ENCODE measurements at regions of chr1 and their contacts with region 1.

Region 1: DNA sequence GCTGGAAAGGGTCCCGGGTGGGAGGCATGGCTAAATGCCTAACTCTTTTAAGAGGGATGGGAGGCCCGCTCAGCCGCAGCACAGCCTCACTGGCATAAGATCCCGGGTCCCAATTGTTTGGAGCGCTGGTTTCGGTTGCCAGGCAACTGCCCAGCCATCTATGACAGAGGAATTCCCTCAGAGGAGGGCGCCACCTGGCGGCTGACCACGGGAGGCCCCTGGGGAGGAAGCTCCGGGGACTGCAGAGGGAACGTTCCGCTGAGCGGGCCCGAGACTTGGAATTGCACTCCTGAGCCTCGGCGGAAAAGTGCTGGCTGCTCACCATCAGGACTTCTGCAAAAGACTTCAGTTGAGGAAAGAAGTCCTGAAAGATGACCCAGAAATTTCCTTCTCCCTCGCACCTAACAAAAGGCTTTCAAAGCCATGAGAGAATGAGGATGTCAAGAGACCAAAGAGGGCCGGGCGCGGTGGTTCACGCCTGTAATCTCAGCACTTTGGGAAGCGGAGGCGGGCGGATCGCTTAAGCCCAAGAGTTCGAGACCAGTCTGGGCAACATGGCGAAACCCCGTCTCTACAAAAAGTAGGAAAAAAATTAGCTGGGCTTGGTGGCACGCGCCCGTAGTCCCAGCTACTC is 1.1 kb upstream of the ELAPOR1 start:
- DNase-seq: peak; percentile 81 to 88
- H3K4me3 ChIP-seq: no peak overlapping the region
- H3K4me3 Mint-ChIP-seq: peak overlapping the region; percentile 39
- H3K27ac Mint-ChIP-seq: peak overlapping the region; percentile 16
- H3K4me1 ChIP-seq: no peaks in the 10 kb centered on the region; the same call in 1 of the 2 replicates
- H3K4me1 Mint-ChIP-seq: no peaks in the 10 kb centered on the region
- H3K27me3 ChIP-seq: no peaks in the 10 kb centered on the region
- H3K27me3 Mint-ChIP-seq: no peaks in the 10 kb centered on the region
- CTCF ChIP-seq: peak; percentile 61 to 76

Region 2: GRCh38 chr1:109075531-109076490 is 37.0 kb before region 1 on chr1 and contains the start of gene TAF13:
- CTCF ChIA-PET with region 1: no interaction called
- POLR2A ChIA-PET with region 1: no interaction called
- intact Hi-C with region 1: no loop called
- DNase-seq: peak; percentile 89 to 91
- H3K4me3 ChIP-seq: peak within 1 kb of the TSS; percentile 71
- H3K4me3 Mint-ChIP-seq: peak within 1 kb of the TSS; percentile 95
- H3K27ac Mint-ChIP-seq: peak within 1 kb of the TSS; percentile 97
- H3K4me1 ChIP-seq: peaks cover under 1% of the 10 kb centered on the region; the same call in 1 of the 2 replicates
- H3K4me1 Mint-ChIP-seq: no peaks in the 10 kb centered on the region
- H3K27me3 ChIP-seq: no peaks in the 10 kb centered on the region
- H3K27me3 Mint-ChIP-seq: no peaks in the 10 kb centered on the region
- CTCF ChIP-seq: no peak
- total RNA-seq, gene TAF13: 21.9 and 25.1 TPM in 2 replicates

Region 3: GRCh38 chr1:109090196-109091077 is 22.3 kb before region 1 on chr1 and contains the start of gene TMEM167B:
- CTCF ChIA-PET with region 1: interaction called, 10 read pairs
- POLR2A ChIA-PET with region 1: no interaction called
- intact Hi-C with region 1: loop called (anchors 1 kb)
- DNase-seq: peak; percentile 85 to 92
- H3K4me3 ChIP-seq: peak within 1 kb of the TSS; percentile 48
- H3K4me3 Mint-ChIP-seq: peak within 1 kb of the TSS; percentile 96
- H3K27ac Mint-ChIP-seq: peak within 1 kb of the TSS; percentile 94
- H3K4me1 ChIP-seq: no peaks in the 10 kb centered on the region
- H3K4me1 Mint-ChIP-seq: peaks cover 6% of the 10 kb centered on the region
- H3K27me3 ChIP-seq: no peaks in the 10 kb centered on the region
- H3K27me3 Mint-ChIP-seq: no peaks in the 10 kb centered on the region
- CTCF ChIP-seq: no peak
- total RNA-seq, gene TMEM167B: 21.8 and 23.5 TPM in 2 replicates

Region 4: GRCh38 chr1:109099938-109100773 is 12.6 kb before region 1 on chr1:
- CTCF ChIA-PET with region 1: interaction called, 10 read pairs
- POLR2A ChIA-PET with region 1: interaction called, 3 read pairs
- intact Hi-C with region 1: no loop called
- DNase-seq: peak; percentile 94 to 96
- H3K4me3 ChIP-seq: peak overlapping the region; percentile 84
- H3K4me3 Mint-ChIP-seq: peak overlapping the region; percentile 92
- H3K27ac Mint-ChIP-seq: peak overlapping the region; percentile 98
- H3K4me1 ChIP-seq: 0 out of 2 replicates have a peak, but pooled peaks cover 3% of the 10 kb centered on the region
- H3K4me1 Mint-ChIP-seq: no peaks in the 10 kb centered on the region
- H3K27me3 ChIP-seq: no peaks in the 10 kb centered on the region
- H3K27me3 Mint-ChIP-seq: no peaks in the 10 kb centered on the region
- CTCF ChIP-seq: peak; percentile 52 to 72

Region 5: DNA sequence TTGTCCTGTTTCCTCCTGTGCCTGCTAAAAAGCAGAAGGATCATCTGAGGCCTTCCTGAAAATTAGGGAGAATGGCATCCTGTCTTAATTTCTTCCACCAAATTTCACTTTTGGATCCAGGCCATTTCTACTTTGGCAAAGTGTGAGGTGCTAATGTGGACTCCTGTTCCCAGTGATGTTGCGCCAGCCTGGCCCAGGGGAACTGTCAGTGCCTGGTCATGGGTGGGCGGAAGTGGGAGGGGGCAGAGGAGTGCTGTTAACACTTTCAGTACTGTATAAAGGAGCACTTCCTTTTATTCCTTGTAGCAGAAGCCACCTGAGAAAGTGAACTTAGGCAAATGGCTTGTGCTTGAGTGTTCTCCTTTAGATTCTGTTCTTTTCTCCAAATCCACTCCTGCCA is 21.0 kb after region 1 on chr1:
- CTCF ChIA-PET with region 1: interaction called, 6 read pairs
- POLR2A ChIA-PET with region 1: no interaction called
- intact Hi-C with region 1: loop called (anchors 2 kb)
- DNase-seq: no peak
- H3K4me3 ChIP-seq: no peak overlapping the region
- H3K4me3 Mint-ChIP-seq: no peak overlapping the region
- H3K27ac Mint-ChIP-seq: no peak overlapping the region
- H3K4me1 ChIP-seq: peaks cover 39% of the 10 kb centered on the region
- H3K4me1 Mint-ChIP-seq: peaks cover 18% of the 10 kb centered on the region
- H3K27me3 ChIP-seq: no peaks in the 10 kb centered on the region
- H3K27me3 Mint-ChIP-seq: no peaks in the 10 kb centered on the region
- CTCF ChIP-seq: no peak

Region 6: DNA sequence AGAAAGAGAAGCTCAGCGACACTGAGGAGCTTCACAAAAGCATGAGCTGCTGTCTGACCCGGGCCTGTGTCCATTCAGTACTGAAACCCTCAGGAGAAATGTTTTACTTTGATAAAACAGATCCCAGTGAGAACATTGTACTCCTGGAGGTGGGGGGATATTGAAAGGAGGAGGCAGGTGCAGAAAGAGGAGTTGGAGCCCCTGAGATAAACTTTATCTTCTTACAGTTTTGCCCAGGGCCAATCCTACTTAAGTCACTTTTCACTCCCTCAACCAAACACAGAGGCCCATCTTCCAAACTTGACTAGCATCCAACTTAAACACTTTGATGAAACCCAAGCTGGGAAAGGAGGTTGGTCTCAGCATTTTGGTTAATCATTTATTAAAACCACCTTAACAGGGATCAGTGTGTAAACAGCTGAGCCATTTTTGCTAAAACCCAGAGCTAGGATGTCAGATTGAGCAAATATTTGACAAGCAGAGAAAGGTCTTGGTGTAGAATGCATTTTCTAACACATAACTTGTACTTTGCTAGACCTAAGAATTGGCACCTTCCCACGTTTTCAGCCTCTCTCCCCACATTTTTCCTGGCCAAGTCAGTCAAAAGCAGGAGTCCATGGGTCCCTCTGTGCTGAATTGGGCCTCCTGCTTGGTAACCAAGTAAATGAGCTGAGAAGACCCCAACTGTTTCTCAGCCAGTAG is 68.5 kb after region 1 on chr1:
- CTCF ChIA-PET with region 1: interaction called, 9 read pairs
- POLR2A ChIA-PET with region 1: no interaction called
- intact Hi-C with region 1: loop called (anchors 1 kb)
- DNase-seq: peak; percentile 71 to 72
- H3K4me3 ChIP-seq: no peak overlapping the region
- H3K4me3 Mint-ChIP-seq: peak overlapping the region; percentile 45
- H3K27ac Mint-ChIP-seq: peak overlapping the region; percentile 73
- H3K4me1 ChIP-seq: peaks cover 35% of the 10 kb centered on the region
- H3K4me1 Mint-ChIP-seq: peaks cover 18% of the 10 kb centered on the region
- H3K27me3 ChIP-seq: no peaks in the 10 kb centered on the region
- H3K27me3 Mint-ChIP-seq: no peaks in the 10 kb centered on the region
- CTCF ChIP-seq: no peak

Region 7: DNA sequence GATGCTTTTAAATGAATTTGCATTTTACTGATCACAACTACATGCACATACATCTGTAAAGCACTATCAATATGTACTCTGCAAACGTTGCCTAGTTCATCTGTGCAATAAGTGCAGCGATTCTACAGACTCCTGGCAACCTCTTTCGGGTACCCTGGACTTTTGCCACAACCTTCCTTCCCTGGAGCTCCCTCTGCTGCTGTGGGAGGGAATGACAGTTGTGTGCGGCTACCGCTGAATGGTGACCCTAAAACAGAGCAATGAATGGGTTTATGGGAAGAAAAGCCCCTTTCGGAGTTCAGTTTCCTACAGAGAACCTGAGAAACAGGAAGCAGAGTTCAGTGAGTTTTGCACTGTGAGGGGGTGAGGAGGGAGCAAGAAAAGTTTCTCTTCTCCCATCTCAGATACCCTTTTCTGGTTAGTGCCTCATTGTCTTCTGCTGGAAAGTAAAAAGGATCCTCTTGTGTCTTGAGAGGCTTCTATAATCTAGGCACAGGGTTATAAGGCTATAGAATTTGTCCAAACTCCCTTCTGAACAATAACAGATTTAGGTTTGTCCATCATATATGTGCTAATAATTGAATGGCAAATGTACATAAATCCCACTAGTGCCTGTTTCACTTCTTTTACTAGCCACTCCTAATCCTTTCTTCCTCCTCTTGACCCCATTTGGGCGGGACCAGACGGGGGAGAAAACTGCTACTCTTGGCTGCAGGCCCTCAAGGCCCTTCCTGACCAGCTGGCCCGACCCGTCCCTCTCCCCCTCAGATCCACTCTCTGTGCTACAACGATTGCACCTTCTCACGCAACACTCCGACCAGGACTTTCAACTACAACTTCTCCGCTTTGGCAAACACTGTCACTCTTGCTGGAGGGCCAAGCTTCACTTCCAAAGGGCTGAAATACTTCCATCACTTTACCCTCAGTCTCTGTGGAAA is 81.2 kb after region 1 on chr1:
- CTCF ChIA-PET with region 1: interaction called, 3 read pairs
- POLR2A ChIA-PET with region 1: no interaction called
- intact Hi-C with region 1: loop called (anchors 1 kb)
- DNase-seq: peak; percentile 59 to 80
- H3K4me3 ChIP-seq: no peak overlapping the region
- H3K4me3 Mint-ChIP-seq: no peak overlapping the region
- H3K27ac Mint-ChIP-seq: no peak overlapping the region
- H3K4me1 ChIP-seq: peaks cover 8% of the 10 kb centered on the region; the same call in 1 of the 2 replicates
- H3K4me1 Mint-ChIP-seq: peaks cover 8% of the 10 kb centered on the region
- H3K27me3 ChIP-seq: no peaks in the 10 kb centered on the region
- H3K27me3 Mint-ChIP-seq: no peaks in the 10 kb centered on the region
- CTCF ChIP-seq: peak; percentile 73 to 82

Region 8: DNA sequence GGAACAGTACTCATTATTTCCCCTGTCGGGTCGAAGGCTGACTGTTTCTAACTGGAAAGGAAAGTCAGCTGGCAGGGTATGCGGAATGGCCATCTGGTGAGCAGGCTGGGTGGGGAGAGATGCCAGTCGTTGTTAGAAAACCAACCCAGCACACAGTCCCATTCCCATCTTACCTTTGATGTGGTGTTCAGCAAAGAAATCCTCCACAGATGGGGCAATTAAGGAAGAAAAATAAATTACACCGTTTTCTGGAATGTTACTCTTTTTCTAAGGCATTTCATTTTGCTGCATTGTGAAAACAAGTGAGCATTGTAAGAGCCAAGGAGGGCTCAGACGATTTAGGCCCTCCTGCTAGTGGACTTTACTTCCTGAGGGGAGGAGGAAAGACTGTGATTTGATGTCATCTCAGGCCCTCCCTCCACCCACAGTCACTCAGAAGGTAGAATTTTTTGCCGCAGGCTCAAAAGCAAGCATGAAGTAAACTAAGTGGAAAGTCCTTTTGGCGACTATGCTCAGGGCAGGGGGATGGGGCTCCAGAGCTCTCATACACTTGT is 1278.0 kb after region 1 on chr1 and contains the start of gene SLC16A4:
- CTCF ChIA-PET with region 1: no interaction called
- POLR2A ChIA-PET with region 1: no interaction called
- intact Hi-C with region 1: no loop called
- DNase-seq: peak; percentile 45 to 54
- H3K4me3 ChIP-seq: peak within 1 kb of the TSS; percentile 11; the same call in 1 of the 2 replicates
- H3K4me3 Mint-ChIP-seq: peak within 1 kb of the TSS; percentile 58
- H3K27ac Mint-ChIP-seq: peak within 1 kb of the TSS; percentile 46
- H3K4me1 ChIP-seq: peaks cover 47% of the 10 kb centered on the region
- H3K4me1 Mint-ChIP-seq: peaks cover 19% of the 10 kb centered on the region
- H3K27me3 ChIP-seq: no peaks in the 10 kb centered on the region
- H3K27me3 Mint-ChIP-seq: no peaks in the 10 kb centered on the region
- CTCF ChIP-seq: no peak
- total RNA-seq, gene SLC16A4: 7.6 and 9.3 TPM in 2 replicates